ENCODE measurements at regions of chr3 and their contacts with region 1.

Region 1: GRCh38 chr3:186930641-186931531 is 560 bp downstream of the ST6GAL1 start:
- DNase-seq: peak; percentile 52
- ATAC-seq: peak; percentile 92
- H3K4me3 ChIP-seq: peak overlapping the region; percentile 96
- H3K27ac ChIP-seq: peak overlapping the region; percentile 81
- H3K4me1 ChIP-seq: peaks cover 11% of the 10 kb centered on the region
- H3K27me3 ChIP-seq: no peaks in the 10 kb centered on the region
- CTCF ChIP-seq: peak; percentile 26 to 33 (median 31); a peak in 5 of 6 replicates
- EP300 ChIP-seq: no peak
- POLR2A ChIP-seq: peak; percentile 67
- RAD21 ChIP-seq: peak; percentile 47

Region 2: GRCh38 chr3:186959029-186959624 is 28.2 kb after region 1 on chr3:
- CTCF ChIA-PET with region 1: interaction called, 6 read pairs
- POLR2A ChIA-PET with region 1: interaction called, 3 read pairs
- RAD21 ChIA-PET with region 1: interaction called, 13 read pairs
- SMC1A ChIA-PET with region 1: interaction called, 7 read pairs
- in situ Hi-C with region 1: no loop called
- intact Hi-C with region 1: no loop called
- DNase-seq: no peak
- ATAC-seq: peak; percentile 69
- H3K4me3 ChIP-seq: no peak overlapping the region
- H3K27ac ChIP-seq: no peak overlapping the region
- H3K4me1 ChIP-seq: peaks cover 18% of the 10 kb centered on the region
- H3K27me3 ChIP-seq: no peaks in the 10 kb centered on the region
- CTCF ChIP-seq: no peak
- EP300 ChIP-seq: no peak
- POLR2A ChIP-seq: no peak
- RAD21 ChIP-seq: peak; percentile 27

Region 3: GRCh38 chr3:186994000-186994955 is 63.4 kb after region 1 on chr3:
- CTCF ChIA-PET with region 1: interaction called, 10 read pairs
- POLR2A ChIA-PET with region 1: interaction called, 20 read pairs
- RAD21 ChIA-PET with region 1: interaction called, 24 read pairs
- SMC1A ChIA-PET with region 1: interaction called, 42 read pairs
- in situ Hi-C with region 1: no loop called
- intact Hi-C with region 1: loop called (anchors 5 kb)
- DNase-seq: no peak
- ATAC-seq: no peak; the same call in 2 of the 3 replicates
- H3K4me3 ChIP-seq: no peak overlapping the region
- H3K27ac ChIP-seq: peak overlapping the region; percentile 75
- H3K4me1 ChIP-seq: peaks cover 62% of the 10 kb centered on the region
- H3K27me3 ChIP-seq: no peaks in the 10 kb centered on the region
- CTCF ChIP-seq: no peak
- EP300 ChIP-seq: no peak
- POLR2A ChIP-seq: no peak
- RAD21 ChIP-seq: no peak

Region 4: GRCh38 chr3:187016639-187017345 is 85.9 kb after region 1 on chr3:
- CTCF ChIA-PET with region 1: interaction called, 8 read pairs
- POLR2A ChIA-PET with region 1: interaction called, 5 read pairs
- RAD21 ChIA-PET with region 1: interaction called, 8 read pairs
- SMC1A ChIA-PET with region 1: interaction called, 10 read pairs
- in situ Hi-C with region 1: no loop called
- intact Hi-C with region 1: loop called (anchors 2 kb)
- DNase-seq: no peak
- ATAC-seq: peak; percentile 68
- H3K4me3 ChIP-seq: peak overlapping the region; percentile 11; the same call in 1 of the 2 replicates
- H3K27ac ChIP-seq: peak overlapping the region; percentile 72
- H3K4me1 ChIP-seq: peaks cover 80% of the 10 kb centered on the region
- H3K27me3 ChIP-seq: no peaks in the 10 kb centered on the region
- CTCF ChIP-seq: no peak
- EP300 ChIP-seq: no peak
- POLR2A ChIP-seq: peak; percentile 46; the same call in 1 of the 2 replicates
- RAD21 ChIP-seq: no peak

Region 5: GRCh38 chr3:187041362-187042307 is 110.7 kb after region 1 on chr3:
- CTCF ChIA-PET with region 1: interaction called, 3 read pairs
- POLR2A ChIA-PET with region 1: interaction called, 5 read pairs
- RAD21 ChIA-PET with region 1: interaction called, 3 read pairs
- SMC1A ChIA-PET with region 1: interaction called, 11 read pairs
- in situ Hi-C with region 1: no loop called
- intact Hi-C with region 1: no loop called
- DNase-seq: no peak
- ATAC-seq: peak; percentile 51
- H3K4me3 ChIP-seq: no peak overlapping the region; the same call in 1 of the 2 replicates
- H3K27ac ChIP-seq: peak overlapping the region; percentile 90
- H3K4me1 ChIP-seq: peaks cover 59% of the 10 kb centered on the region
- H3K27me3 ChIP-seq: no peaks in the 10 kb centered on the region
- CTCF ChIP-seq: no peak
- EP300 ChIP-seq: no peak
- POLR2A ChIP-seq: no peak
- RAD21 ChIP-seq: peak; percentile 1; the same call in 1 of the 2 replicates

Measured in GM12878 (cell line).